ENCODE measurements at regions of chr4 and their contacts with region 1.

Region 1: GRCh38 chr4:47551682-47552081 is 66.6 kb downstream of the ATP10D start:
- DNase-seq: no peak
- H3K4me3 ChIP-seq: no peak overlapping the region
- H3K27ac ChIP-seq: peak overlapping the region; percentile 18
- H3K4me1 ChIP-seq: peaks cover 53% of the 10 kb centered on the region
- H3K27me3 ChIP-seq: no peaks in the 10 kb centered on the region
- CTCF ChIP-seq: no peak

Region 2: DNA sequence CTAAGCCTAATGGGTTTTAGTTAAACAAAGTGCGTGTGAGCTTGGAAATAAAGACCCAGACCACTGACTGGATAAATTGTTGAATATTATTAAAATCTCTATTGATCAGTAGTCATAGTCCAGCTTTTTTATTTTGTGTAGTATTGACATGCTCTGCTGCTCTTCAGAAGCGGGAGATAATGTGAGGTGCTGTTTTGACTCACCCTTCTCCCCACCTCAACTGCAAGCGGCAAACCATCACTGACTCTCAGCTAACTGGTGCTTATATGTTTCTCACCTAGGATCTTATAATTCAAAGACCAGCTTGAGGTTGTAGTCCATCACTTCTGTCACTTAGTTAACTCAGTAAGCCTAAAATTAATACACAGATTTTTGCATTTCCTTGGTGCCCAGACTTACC is 160.4 kb before region 1 on chr4:
- CTCF ChIA-PET with region 1: no interaction called
- POLR2A ChIA-PET with region 1: interaction called, 10 read pairs
- intact Hi-C with region 1: no loop called
- DNase-seq: no peak
- H3K4me3 ChIP-seq: no peak overlapping the region
- H3K27ac ChIP-seq: no peak overlapping the region
- H3K4me1 ChIP-seq: no peaks in the 10 kb centered on the region
- H3K27me3 ChIP-seq: no peaks in the 10 kb centered on the region
- CTCF ChIP-seq: no peak

Region 3: GRCh38 chr4:47510506-47511143 is 41.1 kb before region 1 on chr4:
- CTCF ChIA-PET with region 1: no interaction called
- POLR2A ChIA-PET with region 1: no interaction called
- intact Hi-C with region 1: loop called (anchors 5 kb)
- DNase-seq: peak in 1 of 2 experiments; percentile 67
- H3K4me3 ChIP-seq: no peak overlapping the region
- H3K27ac ChIP-seq: peak overlapping the region; percentile 24
- H3K4me1 ChIP-seq: peaks cover 6% of the 10 kb centered on the region; the same call in 1 of the 2 replicates
- H3K27me3 ChIP-seq: no peaks in the 10 kb centered on the region
- CTCF ChIP-seq: peak; percentile 52; the same call in 1 of the 2 replicates